Activated CD4-positive, alpha-beta T cell treated with anti-CD3 and anti-CD28 coated beads, Interleukin-2, amount 10 ng/mL, durations not matched to agents 24 days and 14 days (primary cell): ENCODE measurements at regions of chr12 and their contacts with region 1.

Region 1: DNA sequence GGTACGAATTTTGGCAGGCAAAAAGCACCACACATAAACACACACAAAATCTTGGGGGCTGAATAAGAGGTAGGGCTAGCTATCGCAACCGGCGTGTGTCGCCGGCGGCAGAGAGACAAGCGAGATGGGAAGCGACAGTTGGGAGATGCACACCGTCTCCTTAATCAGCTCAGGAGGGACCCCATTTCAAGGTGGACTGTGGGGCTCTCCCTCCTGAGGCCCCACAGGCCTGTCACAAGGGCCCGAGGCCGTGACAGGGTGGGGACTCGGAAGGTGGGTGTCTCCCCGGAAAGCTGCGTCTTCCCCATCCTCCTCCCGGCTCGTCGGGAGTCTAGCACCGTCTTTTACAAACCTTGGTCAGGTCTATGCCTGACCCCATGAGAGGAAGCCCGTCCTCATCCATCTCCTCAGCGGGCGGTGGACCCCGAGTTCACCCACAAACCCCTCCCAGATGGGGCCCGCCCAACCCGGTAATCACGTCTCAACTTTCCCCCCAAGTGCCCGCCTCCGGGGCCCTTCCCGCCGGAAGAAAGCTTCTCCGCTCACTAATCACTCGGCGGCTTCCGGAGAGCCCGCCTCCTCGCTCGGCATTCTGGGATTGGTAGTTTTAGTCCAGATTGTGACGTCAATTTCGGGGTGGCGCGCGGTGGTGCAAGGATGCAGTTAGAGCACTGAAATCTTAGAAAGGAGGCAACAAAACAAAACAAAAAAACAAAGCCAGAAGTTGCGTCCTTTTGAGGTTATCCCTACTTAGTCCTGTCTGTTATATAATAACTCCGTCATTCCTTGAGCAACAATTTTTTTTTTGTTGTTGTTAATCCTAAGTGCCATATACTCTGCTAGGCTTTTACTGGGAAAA is at the start of gene WASHC3:
- DNase-seq: peak; percentile 99
- H3K4me3 Mint-ChIP-seq: peak within 1 kb of the TSS; percentile 99
- H3K27ac Mint-ChIP-seq: peak within 1 kb of the TSS; percentile 99
- H3K4me1 Mint-ChIP-seq: peaks cover 33% of the 10 kb centered on the region
- H3K27me3 Mint-ChIP-seq: no peaks in the 10 kb centered on the region
- total RNA-seq, gene WASHC3: 29.0 and 33.1 TPM in 2 replicates

Region 2: GRCh38 chr12:100266835-100267618 is 1794.8 kb before region 1 on chr12 and contains the starts of genes DEPDC4 and SCYL2:
- intact Hi-C with region 1: loop called (anchors 5 kb)
- DNase-seq: peak; percentile 97
- H3K4me3 Mint-ChIP-seq: peak within 1 kb of the TSS; percentile 98
- H3K27ac Mint-ChIP-seq: peak within 1 kb of the TSS; percentile 99
- H3K4me1 Mint-ChIP-seq: peaks cover 22% of the 10 kb centered on the region
- H3K27me3 Mint-ChIP-seq: no peaks in the 10 kb centered on the region
- total RNA-seq, gene DEPDC4: 1.3 and 2.9 TPM in 2 replicates
- total RNA-seq, gene SCYL2: 31.1 and 34.8 TPM in 2 replicates

Region 3: GRCh38 chr12:101792051-101792931 is 269.5 kb before region 1 on chr12:
- intact Hi-C with region 1: loop called (anchors 10 kb)
- DNase-seq: no peak
- H3K4me3 Mint-ChIP-seq: no peak overlapping the region
- H3K27ac Mint-ChIP-seq: peak overlapping the region; percentile 72
- H3K4me1 Mint-ChIP-seq: peaks cover 40% of the 10 kb centered on the region
- H3K27me3 Mint-ChIP-seq: no peaks in the 10 kb centered on the region

Region 4: GRCh38 chr12:101876861-101877815 is 184.7 kb before region 1 on chr12 and contains the start of gene DRAM1:
- intact Hi-C with region 1: loop called (anchors 5 kb)
- DNase-seq: peak; percentile 94
- H3K4me3 Mint-ChIP-seq: peak within 1 kb of the TSS; percentile 95
- H3K27ac Mint-ChIP-seq: peak within 1 kb of the TSS; percentile 90
- H3K4me1 Mint-ChIP-seq: peaks cover 16% of the 10 kb centered on the region
- H3K27me3 Mint-ChIP-seq: peaks cover 2% of the 10 kb centered on the region
- total RNA-seq, gene DRAM1: 4.3 and 4.6 TPM in 2 replicates

Region 5: GRCh38 chr12:102043928-102044327 is 17.9 kb before region 1 on chr12:
- intact Hi-C with region 1: loop called (anchors 1 kb)
- DNase-seq: peak; percentile 85
- H3K4me3 Mint-ChIP-seq: peak overlapping the region; percentile 54
- H3K27ac Mint-ChIP-seq: peak overlapping the region; percentile 46
- H3K4me1 Mint-ChIP-seq: peaks cover 12% of the 10 kb centered on the region
- H3K27me3 Mint-ChIP-seq: no peaks in the 10 kb centered on the region

Region 6: DNA sequence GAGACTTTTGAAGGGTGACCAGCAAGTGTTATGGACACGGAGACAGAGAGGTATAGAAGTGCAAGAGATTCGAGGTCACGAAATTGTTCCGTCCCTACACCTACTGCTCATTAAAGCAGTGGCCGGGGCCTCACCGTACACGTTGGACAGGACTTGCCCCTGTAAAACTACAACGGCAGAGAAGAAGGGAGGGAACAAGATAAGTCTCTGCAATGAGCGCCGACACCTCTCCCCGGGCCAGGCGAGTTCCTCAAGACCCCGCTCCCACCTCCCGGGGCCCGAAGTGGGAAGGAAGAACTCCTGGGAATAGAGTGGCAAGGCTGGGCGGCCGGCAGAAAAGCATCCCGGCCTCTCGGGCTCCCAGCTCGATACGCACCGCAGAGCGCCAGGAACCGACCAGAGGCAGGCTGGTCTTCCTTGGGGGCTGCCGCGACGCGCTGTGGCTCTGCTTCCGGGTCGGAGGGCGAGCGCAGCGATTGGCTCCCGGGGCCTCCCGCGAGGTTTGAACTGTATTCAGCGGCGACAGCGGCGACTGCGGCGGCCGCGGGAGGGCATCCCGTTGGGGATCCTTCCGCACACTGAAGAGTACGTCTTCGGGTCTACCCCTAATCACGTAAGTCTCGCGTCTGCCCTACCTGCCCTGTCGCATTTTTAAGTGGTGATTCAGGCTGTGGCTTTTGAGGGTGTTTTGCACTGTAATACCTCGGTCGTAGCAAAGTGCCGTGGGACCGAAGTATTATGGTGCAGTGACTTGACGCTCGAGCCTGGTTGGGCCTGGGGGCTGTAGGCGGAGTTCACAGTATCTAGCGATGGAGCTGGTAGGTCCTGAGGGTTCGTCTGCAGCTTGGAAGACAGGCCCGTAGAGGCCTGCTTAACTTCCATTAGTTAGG is 58.1 kb after region 1 on chr12 and contains the starts of genes NUP37 and PARPBP:
- intact Hi-C with region 1: loop called (anchors 1 kb)
- DNase-seq: peak; percentile 98
- H3K4me3 Mint-ChIP-seq: peak within 1 kb of the TSS; percentile 96
- H3K27ac Mint-ChIP-seq: peak within 1 kb of the TSS; percentile 94
- H3K4me1 Mint-ChIP-seq: peaks cover 35% of the 10 kb centered on the region
- H3K27me3 Mint-ChIP-seq: no peaks in the 10 kb centered on the region
- total RNA-seq, gene NUP37: 88.1 and 97.3 TPM in 2 replicates
- total RNA-seq, gene PARPBP: 22.9 TPM in 2 replicates